HepG2 (cell line): ENCODE measurements at regions of chr3 and their contacts with region 1.

Region 1: DNA sequence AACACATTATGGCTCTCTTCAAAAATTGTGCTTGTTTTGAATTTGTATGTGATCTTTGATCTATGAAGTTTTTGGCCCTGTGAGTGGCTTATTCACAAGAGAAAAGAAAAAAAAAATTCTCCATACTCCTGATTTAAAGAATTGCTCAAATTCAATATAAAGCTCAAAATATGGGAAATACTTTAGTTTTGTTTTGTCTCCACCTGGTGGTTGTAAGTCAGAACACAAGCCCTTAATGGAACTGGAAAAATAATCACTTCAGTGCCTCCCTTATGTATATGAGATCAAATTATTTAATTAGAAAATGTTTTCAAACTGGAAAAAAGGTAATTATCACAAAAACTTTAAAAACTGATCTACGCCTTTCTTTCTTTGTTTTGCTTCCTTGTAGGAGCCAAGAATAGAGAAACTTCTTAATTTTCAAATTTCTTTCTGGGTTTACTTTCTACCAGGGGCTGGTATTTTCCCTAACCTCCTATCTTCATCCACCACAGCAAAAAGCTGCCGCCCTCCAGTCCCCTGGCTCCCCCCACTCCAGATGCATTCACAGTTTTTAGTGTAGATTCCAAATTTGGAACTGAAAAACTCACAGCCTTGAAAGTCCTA is 50.6 kb downstream of the SERP1 start:
- DNase-seq: peak; percentile 32
- ATAC-seq: no peak
- H3K4me3 ChIP-seq: no peak overlapping the region
- H3K27ac ChIP-seq: no peak overlapping the region
- H3K4me1 ChIP-seq: no peaks in the 10 kb centered on the region
- H3K27me3 ChIP-seq: peaks cover 0 to 1% of the 10 kb centered on the region in 2 experiments; a peak in 1 of 5 replicates
- CTCF ChIP-seq: peak; percentile 69
- EP300 ChIP-seq: no peak
- POLR2A ChIP-seq: no peak
- RAD21 ChIP-seq: peak; percentile 35; the same call in 1 of the 2 replicates

Region 2: DNA sequence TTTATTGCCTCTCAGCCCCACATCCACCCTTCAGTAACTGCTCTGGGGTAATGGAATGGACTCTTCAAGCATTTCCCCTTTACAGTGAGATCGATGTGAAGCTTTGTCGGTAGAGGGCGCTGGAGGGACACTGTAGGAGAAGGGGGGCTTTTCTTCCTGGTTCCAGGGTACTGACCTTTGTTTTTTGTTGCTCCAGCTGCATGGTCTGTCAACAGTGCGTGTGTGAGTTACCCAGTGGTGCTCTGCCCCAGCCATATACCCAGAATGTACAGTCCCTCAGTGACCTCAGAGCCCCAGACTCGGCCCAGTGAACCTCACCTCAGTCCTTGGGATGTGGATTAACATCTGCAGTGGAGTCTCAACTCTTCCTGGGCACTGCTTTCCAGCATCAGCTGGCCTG is 267.8 kb before region 1 on chr3:
- CTCF ChIA-PET with region 1: interaction called, 4 read pairs
- POLR2A ChIA-PET with region 1: no interaction called
- in situ Hi-C with region 1: loop called (anchors 5 kb)
- intact Hi-C with region 1: loop called (anchors 1 kb)
- DNase-seq: peak; percentile 62
- ATAC-seq: peak; percentile 91
- H3K4me3 ChIP-seq: no peak overlapping the region
- H3K27ac ChIP-seq: no peak overlapping the region
- H3K4me1 ChIP-seq: no peaks in the 10 kb centered on the region
- H3K27me3 ChIP-seq: peaks cover 3 to 14% of the 10 kb centered on the region in 2 experiments; a peak in 2 of 5 replicates
- CTCF ChIP-seq: peak; percentile 87
- EP300 ChIP-seq: no peak
- POLR2A ChIP-seq: no peak
- RAD21 ChIP-seq: peak; percentile 33; the same call in 1 of the 2 replicates

Region 3: DNA sequence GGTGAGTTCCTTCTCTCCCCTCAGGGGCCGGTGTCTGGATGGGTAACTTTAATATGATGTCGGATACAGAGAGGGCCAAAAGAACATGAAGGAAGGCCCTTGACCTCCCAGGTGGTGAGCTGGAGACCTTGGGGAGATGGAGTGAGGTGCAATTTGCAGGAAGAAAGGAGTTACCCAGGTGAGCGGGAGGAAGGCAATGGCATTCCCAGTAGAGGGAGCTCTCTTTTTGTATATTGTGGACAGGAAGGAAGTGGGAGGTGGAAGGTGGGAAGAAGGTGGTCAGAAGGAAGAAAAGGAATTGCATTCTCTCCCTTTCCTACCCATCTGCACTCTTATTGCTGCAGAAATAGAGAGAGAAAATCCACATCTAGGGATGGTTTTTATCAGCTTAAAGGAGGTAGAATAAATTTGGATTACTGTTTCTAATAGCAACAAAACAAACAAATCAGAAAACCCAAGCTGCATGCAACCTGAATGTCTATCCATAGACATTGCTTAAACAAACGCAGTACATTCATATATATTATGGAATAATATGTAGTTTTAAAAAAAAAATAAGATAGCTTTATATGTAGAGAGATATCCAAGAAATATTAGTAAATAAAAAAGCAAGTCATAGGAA is 256.6 kb before region 1 on chr3:
- CTCF ChIA-PET with region 1: interaction called, 11 read pairs
- POLR2A ChIA-PET with region 1: no interaction called
- in situ Hi-C with region 1: no loop called
- intact Hi-C with region 1: loop called (anchors 1 kb)
- DNase-seq: peak; percentile 25
- ATAC-seq: peak; percentile 82
- H3K4me3 ChIP-seq: no peak overlapping the region
- H3K27ac ChIP-seq: no peak overlapping the region
- H3K4me1 ChIP-seq: 0 out of 2 replicates have a peak, but pooled peaks cover 4% of the 10 kb centered on the region
- H3K27me3 ChIP-seq: no peaks in the 10 kb centered on the region; a peak in 1 of 5 replicates
- CTCF ChIP-seq: peak; percentile 72
- EP300 ChIP-seq: no peak
- POLR2A ChIP-seq: no peak
- RAD21 ChIP-seq: no peak; the same call in 1 of the 2 replicates

Region 4: GRCh38 chr3:150286390-150287147 is 209.1 kb before region 1 on chr3:
- CTCF ChIA-PET with region 1: interaction called, 44 read pairs
- POLR2A ChIA-PET with region 1: no interaction called
- in situ Hi-C with region 1: loop called (anchors 5 kb)
- intact Hi-C with region 1: loop called (anchors 1 kb)
- DNase-seq: peak; percentile 44
- ATAC-seq: peak; percentile 87
- H3K4me3 ChIP-seq: no peak overlapping the region
- H3K27ac ChIP-seq: no peak overlapping the region
- H3K4me1 ChIP-seq: no peaks in the 10 kb centered on the region
- H3K27me3 ChIP-seq: no peaks in the 10 kb centered on the region
- CTCF ChIP-seq: peak; percentile 63
- EP300 ChIP-seq: no peak
- POLR2A ChIP-seq: no peak
- RAD21 ChIP-seq: peak; percentile 31; the same call in 1 of the 2 replicates

Region 5: DNA sequence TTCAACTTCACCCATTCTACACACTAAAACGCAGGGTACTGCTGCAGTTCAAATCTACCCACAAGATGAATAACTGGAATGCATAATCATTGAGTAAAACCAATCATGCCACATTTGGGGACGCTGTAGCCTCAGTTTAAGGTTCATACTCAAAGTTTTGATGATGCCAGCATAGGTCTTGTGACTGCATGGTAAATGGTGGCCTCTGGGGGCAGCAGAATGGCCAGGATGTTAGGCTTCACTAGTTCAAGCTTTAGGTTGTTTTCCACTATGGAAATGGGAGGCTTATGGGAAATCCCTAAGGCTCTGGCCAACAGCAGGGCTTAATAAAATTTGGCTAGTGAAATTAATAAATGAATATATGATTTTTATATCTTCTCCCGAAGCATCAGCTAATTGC is 191.9 kb before region 1 on chr3:
- CTCF ChIA-PET with region 1: no interaction called
- POLR2A ChIA-PET with region 1: no interaction called
- in situ Hi-C with region 1: no loop called
- intact Hi-C with region 1: loop called (anchors 5 kb)
- DNase-seq: peak; percentile 20
- ATAC-seq: peak; percentile 88
- H3K4me3 ChIP-seq: no peak overlapping the region
- H3K27ac ChIP-seq: no peak overlapping the region
- H3K4me1 ChIP-seq: no peaks in the 10 kb centered on the region
- H3K27me3 ChIP-seq: peaks cover 0 to 5% of the 10 kb centered on the region in 2 experiments; a peak in 1 of 5 replicates
- CTCF ChIP-seq: peak; percentile 31
- EP300 ChIP-seq: no peak
- POLR2A ChIP-seq: no peak
- RAD21 ChIP-seq: no peak

Region 6: GRCh38 chr3:150414258-150414657 is 81.4 kb before region 1 on chr3:
- CTCF ChIA-PET with region 1: interaction called, 4 read pairs
- POLR2A ChIA-PET with region 1: no interaction called
- in situ Hi-C with region 1: no loop called
- intact Hi-C with region 1: loop called (anchors 1 kb)
- DNase-seq: peak; percentile 76
- ATAC-seq: peak; percentile 26
- H3K4me3 ChIP-seq: peak overlapping the region; percentile 89 to 97 (median 90); a peak in 5 of 6 replicates
- H3K27ac ChIP-seq: no peak overlapping the region
- H3K4me1 ChIP-seq: peaks cover 38% of the 10 kb centered on the region
- H3K27me3 ChIP-seq: no peaks in the 10 kb centered on the region; a peak in 1 of 5 replicates
- CTCF ChIP-seq: no peak
- EP300 ChIP-seq: no peak
- POLR2A ChIP-seq: no peak
- RAD21 ChIP-seq: no peak

Region 7: GRCh38 chr3:150511122-150511821 is 15.6 kb after region 1 on chr3:
- CTCF ChIA-PET with region 1: no interaction called
- POLR2A ChIA-PET with region 1: no interaction called
- in situ Hi-C with region 1: no loop called
- intact Hi-C with region 1: no loop called
- DNase-seq: no peak
- ATAC-seq: no peak
- H3K4me3 ChIP-seq: no peak overlapping the region
- H3K27ac ChIP-seq: no peak overlapping the region
- H3K4me1 ChIP-seq: no peaks in the 10 kb centered on the region
- H3K27me3 ChIP-seq: 0 out of 5 replicates have a peak, but pooled peaks cover 0 to 3% of the 10 kb centered on the region in 2 experiments
- CTCF ChIP-seq: no peak
- EP300 ChIP-seq: no peak
- POLR2A ChIP-seq: no peak
- RAD21 ChIP-seq: no peak